Naive thymus-derived CD4-positive, alpha-beta T cell (primary cell): ENCODE measurements at regions of chr3 and their contacts with region 1.

Region 1: DNA sequence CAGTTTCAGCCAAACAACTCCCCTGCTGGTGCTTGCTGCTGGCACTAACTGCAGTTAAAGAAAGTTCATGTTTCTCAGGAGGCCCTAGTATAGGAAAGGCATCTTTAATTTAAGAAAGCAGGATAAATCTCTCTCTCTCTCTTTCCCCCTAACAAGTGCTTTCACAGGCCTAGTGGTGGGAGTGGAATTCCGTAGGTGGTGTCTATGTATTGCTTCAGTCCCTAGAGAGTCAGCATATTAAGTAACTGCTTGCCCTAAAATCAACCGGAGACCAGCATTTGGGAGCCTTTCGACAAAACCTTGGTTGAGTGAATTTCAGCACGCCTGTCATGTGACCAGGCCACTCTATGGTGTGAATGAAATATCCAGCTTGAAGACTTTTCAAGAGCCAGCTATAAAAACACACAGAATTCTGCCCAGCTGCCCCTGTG is 169.2 kb upstream of the TGFBR2 start:
- DNase-seq: no peak
- ATAC-seq: no peak
- H3K4me3 ChIP-seq: no peak overlapping the region
- H3K4me3 Mint-ChIP-seq: peak overlapping the region in 6 of 10 donors; percentile 12 to 77 (median 22)
- H3K27ac ChIP-seq: no peak overlapping the region
- H3K27ac Mint-ChIP-seq: peak overlapping the region in 5 of 9 donors; percentile 15 to 94 (median 75)
- H3K4me1 ChIP-seq: peaks cover 0 to 23% of the 10 kb centered on the region in 2 donors
- H3K4me1 Mint-ChIP-seq: peaks cover 6 to 47% (median 35%) of the 10 kb centered on the region in 7 donors
- H3K27me3 ChIP-seq: no peaks in the 10 kb centered on the region
- H3K27me3 Mint-ChIP-seq: no peaks in the 10 kb centered on the region

Region 2: GRCh38 chr3:30319713-30320112 is 117.5 kb before region 1 on chr3:
- CTCF ChIA-PET with region 1: interaction called, 8 read pairs
- POLR2A ChIA-PET with region 1: interaction called, 3 read pairs
- intact Hi-C with region 1: loop called in 1 of 2 experiments (anchors 5 kb)
- DNase-seq: peak in 7 of 9 donors; percentile 32 to 72 (median 63)
- ATAC-seq: peak; percentile 90
- H3K4me3 ChIP-seq: no peak overlapping the region
- H3K4me3 Mint-ChIP-seq: peak overlapping the region in 4 of 10 donors; percentile 0 to 7 (median 4)
- H3K27ac ChIP-seq: no peak overlapping the region
- H3K27ac Mint-ChIP-seq: peak overlapping the region in 6 of 9 donors; percentile 1 to 60 (median 43)
- H3K4me1 ChIP-seq: peaks cover 0 to 15% of the 10 kb centered on the region in 2 donors
- H3K4me1 Mint-ChIP-seq: peaks cover 3 to 36% (median 20%) of the 10 kb centered on the region in 7 donors
- H3K27me3 ChIP-seq: no peaks in the 10 kb centered on the region
- H3K27me3 Mint-ChIP-seq: no peaks in the 10 kb centered on the region

Region 3: GRCh38 chr3:30481241-30481640 is 44.1 kb after region 1 on chr3:
- CTCF ChIA-PET with region 1: interaction called, 3 read pairs
- POLR2A ChIA-PET with region 1: interaction called, 3 read pairs
- intact Hi-C with region 1: loop called in 1 of 2 experiments (anchors 5 kb)
- DNase-seq: no peak
- ATAC-seq: no peak
- H3K4me3 ChIP-seq: no peak overlapping the region
- H3K4me3 Mint-ChIP-seq: no peak overlapping the region
- H3K27ac ChIP-seq: no peak overlapping the region
- H3K27ac Mint-ChIP-seq: no peak overlapping the region
- H3K4me1 ChIP-seq: peaks cover 0 to 4% of the 10 kb centered on the region in 2 donors
- H3K4me1 Mint-ChIP-seq: peaks cover 6 to 30% (median 17%) of the 10 kb centered on the region in 7 donors
- H3K27me3 ChIP-seq: no peaks in the 10 kb centered on the region
- H3K27me3 Mint-ChIP-seq: no peaks in the 10 kb centered on the region

Region 4: DNA sequence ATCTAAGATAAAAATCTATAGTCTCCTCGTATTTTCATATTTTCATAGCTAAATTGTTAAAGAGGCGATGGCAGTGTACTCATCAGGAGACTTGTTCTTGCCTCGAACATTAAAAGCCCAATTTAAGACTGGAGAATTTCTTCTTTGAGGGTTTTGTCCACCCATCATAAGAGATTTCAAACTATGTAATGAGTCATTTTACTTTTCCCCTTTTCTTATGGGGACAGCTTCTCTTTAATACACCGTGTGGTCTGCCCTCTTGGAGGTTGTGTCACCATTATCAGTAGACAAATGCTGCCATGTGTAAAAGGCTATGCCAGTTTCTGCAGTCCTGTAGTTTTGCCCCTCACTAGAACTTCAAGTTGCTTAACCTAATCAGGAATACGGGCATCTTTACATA is 186.2 kb after region 1 on chr3:
- CTCF ChIA-PET with region 1: no interaction called
- POLR2A ChIA-PET with region 1: no interaction called
- intact Hi-C with region 1: no loop called
- DNase-seq: peak in 1 of 9 donors; percentile 7
- ATAC-seq: no peak
- H3K4me3 ChIP-seq: peak overlapping the region; percentile 14
- H3K4me3 Mint-ChIP-seq: peak overlapping the region; percentile 61 to 100 (median 78)
- H3K27ac ChIP-seq: peak overlapping the region; percentile 45
- H3K27ac Mint-ChIP-seq: peak overlapping the region; percentile 83 to 98 (median 94)
- H3K4me1 ChIP-seq: peaks cover 74 to 98% of the 10 kb centered on the region in 2 donors
- H3K4me1 Mint-ChIP-seq: peaks cover 70 to 100% (median 96%) of the 10 kb centered on the region in 7 donors
- H3K27me3 ChIP-seq: no peaks in the 10 kb centered on the region
- H3K27me3 Mint-ChIP-seq: no peaks in the 10 kb centered on the region

Region 5: GRCh38 chr3:30644593-30645012 is 207.4 kb after region 1 on chr3:
- CTCF ChIA-PET with region 1: no interaction called
- POLR2A ChIA-PET with region 1: no interaction called
- intact Hi-C with region 1: no loop called
- DNase-seq: peak in 7 of 9 donors; percentile 51 to 83 (median 71)
- ATAC-seq: peak; percentile 77
- H3K4me3 ChIP-seq: peak overlapping the region; percentile 23
- H3K4me3 Mint-ChIP-seq: peak overlapping the region; percentile 60 to 88 (median 77)
- H3K27ac ChIP-seq: peak overlapping the region; percentile 69
- H3K27ac Mint-ChIP-seq: peak overlapping the region; percentile 91 to 98 (median 95)
- H3K4me1 ChIP-seq: peaks cover 88 to 98% of the 10 kb centered on the region in 2 donors
- H3K4me1 Mint-ChIP-seq: peaks cover 80 to 99% (median 94%) of the 10 kb centered on the region in 7 donors
- H3K27me3 ChIP-seq: no peaks in the 10 kb centered on the region
- H3K27me3 Mint-ChIP-seq: no peaks in the 10 kb centered on the region